Mammary epithelial cell (primary cell): ENCODE measurements at regions of chr7 and their contacts with region 1.

Region 1: DNA sequence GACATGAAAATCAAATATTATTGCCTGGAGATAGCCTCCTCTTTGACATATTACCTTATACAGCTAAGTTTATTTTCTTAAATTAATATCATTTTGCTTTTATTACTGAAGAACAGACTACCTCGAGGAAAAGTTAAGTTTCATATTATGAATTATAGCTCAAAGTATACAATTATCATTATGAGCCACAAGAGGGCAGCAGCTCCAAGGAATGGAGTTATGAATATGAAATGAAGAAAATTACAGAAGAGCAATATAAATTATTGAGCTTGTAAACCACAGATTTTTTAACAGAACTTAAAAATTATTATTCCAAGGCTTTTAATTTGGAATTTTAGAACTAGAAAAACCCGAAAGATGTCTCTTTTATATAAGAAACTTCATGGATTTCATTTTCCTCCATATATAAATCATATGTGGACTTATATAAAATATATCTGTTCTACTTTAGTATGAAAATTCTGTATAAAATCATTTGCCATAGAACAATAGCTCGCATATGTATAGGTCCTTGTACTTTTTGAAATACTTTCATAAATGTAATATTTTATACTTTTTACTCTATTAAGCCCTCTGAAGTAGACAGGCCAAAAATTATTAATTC is 40.1 kb downstream of the IQUB start:
- DNase-seq: peak; percentile 11
- H3K4me3 ChIP-seq: no peak overlapping the region
- H3K27ac ChIP-seq: no peak overlapping the region
- H3K4me1 ChIP-seq: no peaks in the 10 kb centered on the region
- H3K27me3 ChIP-seq: no peaks in the 10 kb centered on the region
- CTCF ChIP-seq: peak; percentile 63 to 67

Region 2: GRCh38 chr7:123522066-123522465 is 27.8 kb after region 1 on chr7:
- CTCF ChIA-PET with region 1: no interaction called
- dilution Hi-C with region 1: no loop called
- in situ Hi-C with region 1: no loop called
- intact Hi-C with region 1: no loop called
- DNase-seq: no peak
- H3K4me3 ChIP-seq: no peak overlapping the region
- H3K27ac ChIP-seq: no peak overlapping the region
- H3K4me1 ChIP-seq: no peaks in the 10 kb centered on the region
- H3K27me3 ChIP-seq: peaks cover 3% of the 10 kb centered on the region
- CTCF ChIP-seq: no peak

Region 3: GRCh38 chr7:123534383-123535260 is 40.3 kb after region 1 on chr7 and contains the start of gene IQUB:
- CTCF ChIA-PET with region 1: interaction called, 6 read pairs
- dilution Hi-C with region 1: no loop called
- in situ Hi-C with region 1: no loop called
- intact Hi-C with region 1: loop called (anchors 1 kb)
- DNase-seq: peak; percentile 93
- H3K4me3 ChIP-seq: peak within 1 kb of the TSS; percentile 59 to 85 (median 62)
- H3K27ac ChIP-seq: peak within 1 kb of the TSS; percentile 70
- H3K4me1 ChIP-seq: peaks cover 22% of the 10 kb centered on the region
- H3K27me3 ChIP-seq: no peaks in the 10 kb centered on the region
- CTCF ChIP-seq: no peak
- total RNA-seq, gene IQUB: 0.26 to 1.5 TPM

Region 4: DNA sequence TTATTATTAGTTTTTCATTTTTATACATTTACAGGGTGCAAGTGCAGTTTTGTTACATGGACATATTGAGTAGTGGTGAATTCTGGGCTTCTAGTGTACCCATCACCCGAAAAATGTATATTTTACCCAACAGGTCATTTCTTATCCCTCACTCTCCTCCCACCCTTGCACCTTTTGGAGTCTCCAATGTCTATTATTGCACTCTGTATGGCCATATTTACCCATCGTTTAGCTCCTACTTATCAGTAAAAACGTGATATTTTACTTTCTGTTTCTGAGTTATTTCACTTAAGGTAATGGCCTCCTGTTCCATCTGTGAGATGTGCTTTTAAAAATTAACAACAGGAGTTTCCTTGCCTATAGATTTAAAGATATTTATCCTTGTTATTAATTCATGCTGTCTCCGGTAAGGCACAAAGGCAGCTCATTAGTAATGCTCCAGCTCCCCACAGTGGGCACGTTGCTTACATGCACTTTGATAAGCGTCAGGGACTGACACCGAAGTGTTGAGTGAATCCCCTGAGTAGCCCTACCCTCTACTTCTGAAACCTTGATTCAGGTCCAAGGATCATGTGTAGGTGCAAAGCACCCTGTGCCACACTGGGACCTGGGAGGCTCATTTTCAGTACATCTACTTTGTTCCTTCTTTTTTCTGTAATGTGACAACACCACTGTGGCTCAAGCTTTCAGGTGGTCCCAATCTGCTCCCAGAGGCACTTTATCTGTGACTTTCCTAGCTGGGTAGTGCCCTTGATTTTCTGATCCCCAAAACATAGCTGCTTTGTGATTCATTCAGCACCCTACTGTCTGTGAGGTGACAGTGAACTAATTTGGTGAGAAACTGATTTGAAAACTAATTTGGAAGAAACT is 377.9 kb after region 1 on chr7:
- CTCF ChIA-PET with region 1: interaction called, 7 read pairs
- dilution Hi-C with region 1: no loop called
- in situ Hi-C with region 1: no loop called
- intact Hi-C with region 1: loop called (anchors 1 kb)
- DNase-seq: peak; percentile 45
- H3K4me3 ChIP-seq: no peak overlapping the region
- H3K27ac ChIP-seq: no peak overlapping the region
- H3K4me1 ChIP-seq: no peaks in the 10 kb centered on the region
- H3K27me3 ChIP-seq: no peaks in the 10 kb centered on the region
- CTCF ChIP-seq: peak; percentile 73 to 76